Right ventricle myocardium inferior (tissue), 1 donor: ENCODE measurements at regions of chr2 and their contacts with region 1.

Region 1: DNA sequence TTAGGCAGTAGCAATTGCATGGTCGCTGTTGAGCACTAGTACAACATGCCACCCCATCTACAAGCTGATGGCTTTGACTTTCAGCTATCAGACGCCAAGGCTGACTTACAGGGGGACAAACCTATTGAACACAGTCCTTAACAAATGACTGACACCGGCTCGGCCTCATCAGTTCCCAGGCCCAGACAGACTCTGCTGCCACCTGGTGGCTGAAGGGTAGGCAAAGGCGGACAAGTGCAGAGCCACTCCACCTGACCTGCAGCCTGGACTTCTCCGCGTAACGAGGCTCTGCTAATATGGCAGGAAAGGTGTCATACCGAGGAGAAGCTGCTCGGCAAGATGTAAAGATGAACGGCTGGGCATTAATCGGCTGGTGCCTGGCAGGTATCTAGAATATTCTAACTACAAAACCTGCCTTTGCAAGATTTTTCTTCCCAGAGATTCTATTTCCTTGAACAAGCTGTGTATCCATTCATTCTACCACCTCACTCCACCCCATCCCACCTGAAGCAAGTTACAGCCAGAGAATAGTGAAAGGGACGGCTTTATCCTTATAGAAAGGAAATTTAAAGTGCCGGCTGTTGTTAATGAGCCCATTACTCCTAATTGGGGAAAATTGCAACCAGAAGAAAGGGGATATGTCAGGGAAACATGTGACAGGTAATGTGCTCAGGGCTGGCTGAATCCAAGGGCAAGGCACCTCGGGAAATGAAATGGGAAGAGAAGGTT is 67.4 kb downstream of the STEAP3 start:
- DNase-seq: peak; percentile 86
- ATAC-seq: peak; percentile 80

Region 2: GRCh38 chr2:118748245-118748885 is 542.7 kb before region 1 on chr2:
- intact Hi-C with region 1: no loop called
- DNase-seq: no peak
- ATAC-seq: no peak

Region 3: GRCh38 chr2:118882709-118883210 is 408.3 kb before region 1 on chr2:
- intact Hi-C with region 1: loop called (anchors 5 kb)
- DNase-seq: peak; percentile 74
- ATAC-seq: peak; percentile 70

Region 4: GRCh38 chr2:119011162-119011909 is 279.7 kb before region 1 on chr2:
- intact Hi-C with region 1: loop called (anchors 5 kb)
- DNase-seq: peak; percentile 62
- ATAC-seq: peak; percentile 85

Region 5: GRCh38 chr2:119223521-119224390 is 67.3 kb before region 1 on chr2 and contains the start of gene STEAP3:
- intact Hi-C with region 1: loop called (anchors 5 kb)
- DNase-seq: peak; percentile 84
- ATAC-seq: peak; percentile 93
- total RNA-seq, gene STEAP3: 12.9 TPM

Region 6: DNA sequence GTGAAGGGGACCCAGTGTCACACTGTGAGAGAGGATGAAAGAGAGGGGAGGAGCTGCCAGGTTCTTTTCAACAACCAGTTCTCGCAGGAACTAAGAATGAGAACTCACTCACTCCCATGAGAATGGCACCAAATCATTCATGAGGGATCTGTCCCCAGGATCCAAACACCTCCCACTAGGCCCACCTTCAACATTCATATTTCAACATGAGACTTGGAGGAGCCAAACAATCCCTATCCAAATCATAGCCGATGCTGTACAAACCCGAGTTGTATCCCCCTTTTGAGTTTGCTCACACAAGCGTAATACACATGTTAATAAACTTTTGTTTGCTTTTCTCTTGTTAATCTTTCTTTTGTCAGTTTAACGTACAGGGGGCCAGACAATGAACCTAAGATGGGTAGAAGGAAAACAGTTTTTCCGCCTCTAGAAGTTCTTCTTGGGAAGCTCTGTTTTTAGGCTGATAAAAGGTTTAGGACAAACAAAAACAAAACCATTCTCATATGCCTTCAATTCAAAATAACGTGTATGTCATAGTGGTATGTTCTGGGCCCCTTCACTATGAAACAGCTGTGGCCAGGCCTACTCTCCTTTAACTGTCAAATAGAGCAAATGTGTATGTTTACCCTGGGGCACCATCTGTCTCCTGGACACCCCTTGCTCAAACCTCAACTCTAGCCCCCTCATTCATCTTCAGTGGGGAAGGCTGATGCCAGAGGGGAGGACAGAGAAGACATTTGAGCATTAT is 131.5 kb after region 1 on chr2:
- intact Hi-C with region 1: no loop called
- DNase-seq: no peak
- ATAC-seq: no peak